Activated B cell treated with CpG ODN at 0.5 μM for 24 hours (primary cell): ENCODE measurements at regions of chr12 and their contacts with region 1.

Region 1: GRCh38 chr12:42237052-42237852 is 796 bp downstream of the YAF2 start:
- DNase-seq: peak; percentile 69
- ATAC-seq: peak; percentile 78
- H3K4me3 Mint-ChIP-seq: peak overlapping the region; percentile 93
- H3K27ac Mint-ChIP-seq: peak overlapping the region; percentile 92
- H3K4me1 Mint-ChIP-seq: peaks cover 37% of the 10 kb centered on the region
- H3K27me3 Mint-ChIP-seq: no peaks in the 10 kb centered on the region
- CTCF ChIP-seq: no peak

Region 2: DNA sequence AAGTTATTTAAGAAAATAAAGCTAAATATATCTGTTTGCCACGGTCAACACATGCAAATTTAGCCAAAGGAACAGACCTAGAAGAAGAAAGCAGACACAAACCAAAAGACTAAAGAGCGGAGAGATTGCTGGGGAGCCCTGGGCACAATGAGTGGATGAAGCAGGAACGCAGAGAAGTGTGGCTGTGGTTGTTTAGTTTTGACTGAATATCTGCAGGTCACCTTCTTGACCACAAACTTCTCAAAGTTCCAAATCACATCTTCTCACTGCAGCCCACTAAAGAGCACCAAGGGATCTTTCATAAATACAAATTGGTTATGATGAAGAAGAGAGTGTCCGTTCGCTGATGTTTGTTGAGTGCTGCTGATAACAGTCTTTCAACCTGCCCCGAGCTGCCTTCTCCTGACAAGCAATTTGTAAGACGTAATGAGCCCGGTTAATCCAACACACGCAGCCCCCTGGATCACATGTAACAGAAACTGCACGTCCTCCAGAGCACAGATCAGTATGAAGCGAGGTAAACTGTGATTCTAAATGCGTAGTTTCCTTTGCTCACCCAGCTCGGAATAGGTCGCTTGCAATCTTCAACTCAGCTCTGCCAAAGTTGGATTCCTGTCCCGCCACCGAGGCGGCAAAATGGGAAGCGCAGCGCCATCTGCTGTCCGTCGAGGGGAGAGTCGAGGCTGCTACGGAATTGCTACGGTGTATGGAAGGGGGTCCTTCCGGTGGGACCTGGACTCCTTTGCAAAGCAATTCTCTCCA is 213.3 kb before region 1 on chr12:
- CTCF ChIA-PET with region 1: no interaction called
- POLR2A ChIA-PET with region 1: no interaction called
- intact Hi-C with region 1: no loop called
- DNase-seq: peak; percentile 58
- ATAC-seq: peak; percentile 82
- H3K4me3 Mint-ChIP-seq: peak overlapping the region; percentile 76
- H3K27ac Mint-ChIP-seq: no peak overlapping the region
- H3K4me1 Mint-ChIP-seq: peaks cover 6% of the 10 kb centered on the region
- H3K27me3 Mint-ChIP-seq: peaks cover 10% of the 10 kb centered on the region
- CTCF ChIP-seq: peak; percentile 100

Region 3: GRCh38 chr12:42097971-42098370 is 139.3 kb before region 1 on chr12:
- CTCF ChIA-PET with region 1: no interaction called
- POLR2A ChIA-PET with region 1: no interaction called
- intact Hi-C with region 1: loop called (anchors 5 kb)
- DNase-seq: no peak
- ATAC-seq: peak; percentile 82
- H3K4me3 Mint-ChIP-seq: peak overlapping the region; percentile 81
- H3K27ac Mint-ChIP-seq: peak overlapping the region; percentile 86
- H3K4me1 Mint-ChIP-seq: peaks cover 31% of the 10 kb centered on the region
- H3K27me3 Mint-ChIP-seq: no peaks in the 10 kb centered on the region
- CTCF ChIP-seq: no peak

Region 4: GRCh38 chr12:42325653-42326474 is 88.6 kb after region 1 on chr12 and contains the starts of genes PPHLN1 and ZCRB1:
- CTCF ChIA-PET with region 1: no interaction called
- POLR2A ChIA-PET with region 1: interaction called, 6 read pairs
- intact Hi-C with region 1: loop called (anchors 1 kb)
- DNase-seq: peak; percentile 73
- ATAC-seq: peak; percentile 89
- H3K4me3 Mint-ChIP-seq: peak within 1 kb of the TSS; percentile 94
- H3K27ac Mint-ChIP-seq: peak within 1 kb of the TSS; percentile 90
- H3K4me1 Mint-ChIP-seq: peaks cover 51% of the 10 kb centered on the region
- H3K27me3 Mint-ChIP-seq: no peaks in the 10 kb centered on the region
- CTCF ChIP-seq: no peak
- total RNA-seq, gene PPHLN1: 94.0 and 95.9 TPM in 2 replicates
- total RNA-seq, gene ZCRB1: 37.4 and 37.6 TPM in 2 replicates

Region 5: GRCh38 chr12:42568952-42569915 is 332.0 kb after region 1 on chr12:
- CTCF ChIA-PET with region 1: no interaction called
- POLR2A ChIA-PET with region 1: no interaction called
- intact Hi-C with region 1: loop called (anchors 2 kb)
- DNase-seq: no peak
- ATAC-seq: no peak
- H3K4me3 Mint-ChIP-seq: no peak overlapping the region
- H3K27ac Mint-ChIP-seq: no peak overlapping the region
- H3K4me1 Mint-ChIP-seq: no peaks in the 10 kb centered on the region
- H3K27me3 Mint-ChIP-seq: no peaks in the 10 kb centered on the region
- CTCF ChIP-seq: no peak

Region 6: GRCh38 chr12:43805860-43806736 is 1568.8 kb after region 1 on chr12 and contains the start of gene TWF1:
- CTCF ChIA-PET with region 1: no interaction called
- POLR2A ChIA-PET with region 1: no interaction called
- intact Hi-C with region 1: loop called (anchors 10 kb)
- DNase-seq: peak; percentile 94
- ATAC-seq: peak; percentile 92
- H3K4me3 Mint-ChIP-seq: peak within 1 kb of the TSS; percentile 100
- H3K27ac Mint-ChIP-seq: peak within 1 kb of the TSS; percentile 100
- H3K4me1 Mint-ChIP-seq: peaks cover 31% of the 10 kb centered on the region
- H3K27me3 Mint-ChIP-seq: no peaks in the 10 kb centered on the region
- CTCF ChIP-seq: no peak
- total RNA-seq, gene TWF1: 26.8 and 28.2 TPM in 2 replicates